ENCODE measurements at regions of chr16 and their contacts with region 1.

Region 1: DNA sequence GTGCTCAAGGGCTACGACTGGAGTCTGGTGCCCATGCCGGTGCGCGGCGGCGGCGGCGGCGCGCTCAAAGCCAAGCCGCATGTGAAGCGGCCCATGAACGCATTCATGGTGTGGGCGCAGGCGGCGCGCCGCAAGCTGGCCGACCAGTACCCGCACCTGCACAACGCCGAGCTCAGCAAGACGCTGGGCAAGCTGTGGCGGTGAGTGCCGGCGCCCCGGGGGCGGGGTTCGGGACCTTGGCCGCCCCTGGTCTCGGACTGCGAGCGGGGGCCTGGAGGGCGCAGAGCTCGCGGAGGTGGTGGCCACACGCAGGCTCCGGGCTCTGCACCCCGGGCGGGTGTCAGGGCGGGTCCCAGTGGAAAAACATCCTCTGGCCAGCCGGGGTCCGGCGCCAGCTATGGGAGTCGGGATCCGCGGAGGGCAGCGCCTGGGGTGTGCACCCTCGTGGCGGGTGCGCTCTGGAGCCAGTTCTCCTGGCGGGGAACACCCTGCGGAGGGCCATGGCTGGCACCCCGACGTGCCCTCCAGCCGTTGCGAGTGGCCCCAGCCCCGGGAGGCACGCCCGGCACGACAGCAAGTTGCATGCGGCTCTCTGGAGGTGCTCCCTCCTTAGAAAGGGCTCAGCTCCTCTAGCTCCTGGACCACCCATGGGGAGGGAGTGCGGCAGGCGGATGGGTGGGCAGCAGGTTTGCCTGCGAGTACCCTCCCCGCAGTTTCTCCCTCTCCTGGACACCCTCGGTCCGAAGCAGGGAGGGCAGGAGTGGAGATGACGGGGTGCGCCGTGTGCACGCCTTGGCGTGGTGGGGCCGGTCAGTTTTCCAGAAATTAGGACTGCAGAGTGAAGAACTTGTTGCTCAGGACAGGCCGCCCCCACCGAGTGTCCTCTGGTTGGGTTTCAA is 824 bp downstream of the SOX8 start:
- DNase-seq: peak in 1 of 9 donors; percentile 37
- ATAC-seq: peak; percentile 16
- H3K4me3 ChIP-seq: no peak overlapping the region
- H3K4me3 Mint-ChIP-seq: peak overlapping the region; percentile 23 to 83 (median 66)
- H3K27ac ChIP-seq: no peak overlapping the region
- H3K27ac Mint-ChIP-seq: peak overlapping the region in 3 of 9 donors; percentile 10 to 25 (median 13)
- H3K4me1 ChIP-seq: peaks cover 0 to 5% of the 10 kb centered on the region in 2 donors
- H3K4me1 Mint-ChIP-seq: peaks cover 0 to 20% (median 13%) of the 10 kb centered on the region in 7 donors
- H3K27me3 ChIP-seq: no peaks in the 10 kb centered on the region
- H3K27me3 Mint-ChIP-seq: peaks cover 0 to 29% (median 0%) of the 10 kb centered on the region in 5 donors

Region 2: DNA sequence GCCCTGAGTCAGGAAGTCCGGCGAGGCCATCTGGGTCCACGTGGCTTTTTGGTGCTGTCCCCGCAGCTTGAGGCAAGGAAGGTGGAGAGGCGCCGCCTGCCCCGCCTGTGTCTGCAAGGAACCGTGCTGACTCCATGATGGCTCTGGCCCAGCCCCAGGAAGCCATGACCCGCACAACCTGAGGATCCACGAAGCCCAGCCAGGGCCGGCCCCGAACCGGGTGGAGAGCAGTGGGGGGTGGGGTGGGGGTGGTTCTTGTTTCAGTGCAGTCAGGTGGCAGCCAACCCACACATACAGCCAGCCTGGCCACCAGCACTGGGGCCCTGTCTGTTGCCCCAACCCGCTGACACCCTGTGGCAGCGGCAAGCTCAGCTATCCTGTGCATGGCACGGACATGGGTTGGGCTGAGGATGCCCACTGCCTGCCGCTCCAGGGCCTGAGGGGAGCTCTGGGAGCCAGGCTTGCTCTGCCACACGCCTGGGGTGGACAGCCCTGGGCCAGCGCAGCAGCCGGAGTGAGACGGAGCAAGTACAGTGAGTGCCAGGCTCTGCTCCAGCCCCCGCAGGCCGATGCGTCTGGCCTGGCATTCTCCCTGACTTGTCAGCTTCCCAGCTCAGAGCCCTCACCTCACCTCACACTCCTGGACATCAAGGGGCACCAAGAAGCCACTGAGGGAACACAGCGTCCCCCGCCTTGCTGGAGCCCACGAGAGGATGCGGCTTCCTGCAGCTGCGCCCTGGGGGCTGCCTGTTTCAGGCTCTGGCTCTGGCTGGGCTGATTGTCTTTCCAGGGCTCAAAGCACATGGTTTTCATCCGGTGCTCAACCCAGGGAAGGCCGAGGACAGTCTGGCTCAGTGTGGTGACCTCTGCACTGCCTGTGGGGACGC is 80.4 kb before region 1 on chr16:
- CTCF ChIA-PET with region 1: no interaction called
- POLR2A ChIA-PET with region 1: no interaction called
- intact Hi-C with region 1: no loop called
- DNase-seq: no peak
- ATAC-seq: no peak
- H3K4me3 ChIP-seq: no peak overlapping the region
- H3K4me3 Mint-ChIP-seq: no peak overlapping the region
- H3K27ac ChIP-seq: no peak overlapping the region
- H3K27ac Mint-ChIP-seq: no peak overlapping the region
- H3K4me1 ChIP-seq: no peaks in the 10 kb centered on the region
- H3K4me1 Mint-ChIP-seq: peaks cover 0 to 9% (median 0%) of the 10 kb centered on the region in 7 donors
- H3K27me3 ChIP-seq: no peaks in the 10 kb centered on the region
- H3K27me3 Mint-ChIP-seq: no peaks in the 10 kb centered on the region

Region 3: DNA sequence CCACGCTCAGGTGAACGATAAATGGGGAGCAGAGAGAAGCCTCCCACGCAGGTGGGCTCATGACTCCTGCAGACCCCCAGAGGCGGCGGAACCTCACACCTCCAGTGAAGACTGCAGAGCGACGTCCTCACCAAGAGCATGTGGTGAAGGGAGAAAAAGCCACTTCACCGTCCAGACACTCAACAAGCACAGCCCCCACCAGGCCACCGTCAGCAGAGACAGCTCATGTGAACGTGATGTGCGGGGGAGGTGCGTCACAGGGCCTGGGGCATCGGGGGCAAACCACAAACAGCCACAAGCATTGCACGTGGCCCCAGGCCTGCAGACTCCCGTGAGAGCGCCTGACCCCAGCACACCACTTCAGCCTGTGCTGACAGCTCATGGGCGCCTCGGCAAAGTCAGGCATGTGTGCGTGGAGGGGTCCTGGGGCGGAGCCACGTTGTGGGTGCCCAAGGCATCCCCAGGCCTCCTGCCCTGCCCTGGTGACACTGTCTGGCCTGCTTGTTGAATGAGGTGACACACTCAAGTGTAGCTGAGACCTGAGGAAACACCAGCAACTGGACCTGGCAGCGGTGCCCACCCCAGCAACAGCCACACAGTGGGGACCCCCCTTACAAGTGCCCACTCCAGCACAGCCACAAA is 30.6 kb before region 1 on chr16:
- CTCF ChIA-PET with region 1: no interaction called
- POLR2A ChIA-PET with region 1: no interaction called
- intact Hi-C with region 1: no loop called
- DNase-seq: no peak
- ATAC-seq: no peak
- H3K4me3 ChIP-seq: no peak overlapping the region
- H3K4me3 Mint-ChIP-seq: no peak overlapping the region
- H3K27ac ChIP-seq: no peak overlapping the region
- H3K27ac Mint-ChIP-seq: no peak overlapping the region
- H3K4me1 ChIP-seq: no peaks in the 10 kb centered on the region
- H3K4me1 Mint-ChIP-seq: peaks cover 3 to 18% (median 14%) of the 10 kb centered on the region in 7 donors
- H3K27me3 ChIP-seq: no peaks in the 10 kb centered on the region
- H3K27me3 Mint-ChIP-seq: no peaks in the 10 kb centered on the region

Region 4: DNA sequence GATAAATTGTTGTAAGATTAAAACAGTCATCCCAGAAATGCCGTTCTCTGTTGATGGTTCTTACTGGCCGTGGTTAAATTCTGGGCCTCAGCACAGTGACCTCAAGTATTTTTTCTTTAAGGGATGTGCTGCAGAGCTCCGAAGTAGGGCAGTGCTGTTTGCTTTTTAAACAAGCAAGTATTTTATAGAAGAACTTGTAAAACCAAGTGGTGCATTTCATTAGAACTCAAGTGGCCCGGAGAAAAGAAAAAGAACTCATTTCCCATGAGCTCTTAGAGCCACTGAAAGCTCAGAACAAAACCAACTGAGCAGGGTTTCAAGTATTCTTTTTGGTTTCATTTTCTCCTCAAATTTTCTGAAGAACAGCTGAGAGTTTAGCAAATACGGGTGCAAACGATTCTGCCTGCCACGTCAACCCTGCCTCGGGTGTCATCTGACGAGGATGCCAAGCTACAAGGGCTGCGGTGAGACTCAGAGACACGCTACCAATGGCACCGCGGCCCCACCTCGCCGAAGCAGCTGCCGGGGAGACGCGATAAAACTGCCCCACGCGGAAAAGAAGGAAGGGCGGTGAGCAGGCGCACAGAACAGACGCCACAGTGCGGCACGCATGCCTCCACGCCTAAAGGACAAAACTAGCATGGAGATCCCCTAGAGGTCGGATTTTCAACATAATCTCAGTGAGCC is 17.9 kb before region 1 on chr16:
- CTCF ChIA-PET with region 1: no interaction called
- POLR2A ChIA-PET with region 1: interaction called, 66 read pairs
- intact Hi-C with region 1: loop called in 1 of 2 experiments (anchors 2 kb)
- DNase-seq: peak in 6 of 9 donors; percentile 59 to 82 (median 72)
- ATAC-seq: peak; percentile 96
- H3K4me3 ChIP-seq: no peak overlapping the region
- H3K4me3 Mint-ChIP-seq: peak overlapping the region; percentile 30 to 83 (median 74)
- H3K27ac ChIP-seq: peak overlapping the region; percentile 69
- H3K27ac Mint-ChIP-seq: peak overlapping the region; percentile 43 to 96 (median 87)
- H3K4me1 ChIP-seq: peaks cover under 1 to 10% of the 10 kb centered on the region in 2 donors
- H3K4me1 Mint-ChIP-seq: peaks cover 28 to 57% (median 48%) of the 10 kb centered on the region in 7 donors
- H3K27me3 ChIP-seq: no peaks in the 10 kb centered on the region
- H3K27me3 Mint-ChIP-seq: no peaks in the 10 kb centered on the region

Region 5: GRCh38 chr16:1003391-1004347 is 21.3 kb after region 1 on chr16:
- CTCF ChIA-PET with region 1: interaction called, 3 read pairs
- POLR2A ChIA-PET with region 1: interaction called, 87 read pairs
- intact Hi-C with region 1: loop called in 1 of 2 experiments (anchors 2 kb)
- DNase-seq: peak in 7 of 9 donors; percentile 50 to 69 (median 66)
- ATAC-seq: peak; percentile 76
- H3K4me3 ChIP-seq: peak overlapping the region; percentile 36
- H3K4me3 Mint-ChIP-seq: peak overlapping the region; percentile 74 to 90 (median 87)
- H3K27ac ChIP-seq: peak overlapping the region; percentile 68
- H3K27ac Mint-ChIP-seq: peak overlapping the region; percentile 73 to 98 (median 95)
- H3K4me1 ChIP-seq: peaks cover 25 to 37% of the 10 kb centered on the region in 2 donors
- H3K4me1 Mint-ChIP-seq: peaks cover 12 to 48% (median 28%) of the 10 kb centered on the region in 7 donors
- H3K27me3 ChIP-seq: no peaks in the 10 kb centered on the region
- H3K27me3 Mint-ChIP-seq: peaks cover 0 to 24% (median 0%) of the 10 kb centered on the region in 5 donors

Region 6: GRCh38 chr16:1054660-1055556 is 72.5 kb after region 1 on chr16:
- CTCF ChIA-PET with region 1: interaction called, 3 read pairs
- POLR2A ChIA-PET with region 1: interaction called, 5 read pairs
- intact Hi-C with region 1: loop called in 1 of 2 experiments (anchors 1 kb)
- DNase-seq: peak in 4 of 9 donors; percentile 23 to 41 (median 26)
- ATAC-seq: no peak
- H3K4me3 ChIP-seq: no peak overlapping the region
- H3K4me3 Mint-ChIP-seq: no peak overlapping the region
- H3K27ac ChIP-seq: no peak overlapping the region
- H3K27ac Mint-ChIP-seq: peak overlapping the region in 1 of 9 donors; percentile 46
- H3K4me1 ChIP-seq: no peaks in the 10 kb centered on the region
- H3K4me1 Mint-ChIP-seq: peaks cover 0 to 2% (median 0%) of the 10 kb centered on the region in 7 donors
- H3K27me3 ChIP-seq: no peaks in the 10 kb centered on the region
- H3K27me3 Mint-ChIP-seq: no peaks in the 10 kb centered on the region

Region 7: DNA sequence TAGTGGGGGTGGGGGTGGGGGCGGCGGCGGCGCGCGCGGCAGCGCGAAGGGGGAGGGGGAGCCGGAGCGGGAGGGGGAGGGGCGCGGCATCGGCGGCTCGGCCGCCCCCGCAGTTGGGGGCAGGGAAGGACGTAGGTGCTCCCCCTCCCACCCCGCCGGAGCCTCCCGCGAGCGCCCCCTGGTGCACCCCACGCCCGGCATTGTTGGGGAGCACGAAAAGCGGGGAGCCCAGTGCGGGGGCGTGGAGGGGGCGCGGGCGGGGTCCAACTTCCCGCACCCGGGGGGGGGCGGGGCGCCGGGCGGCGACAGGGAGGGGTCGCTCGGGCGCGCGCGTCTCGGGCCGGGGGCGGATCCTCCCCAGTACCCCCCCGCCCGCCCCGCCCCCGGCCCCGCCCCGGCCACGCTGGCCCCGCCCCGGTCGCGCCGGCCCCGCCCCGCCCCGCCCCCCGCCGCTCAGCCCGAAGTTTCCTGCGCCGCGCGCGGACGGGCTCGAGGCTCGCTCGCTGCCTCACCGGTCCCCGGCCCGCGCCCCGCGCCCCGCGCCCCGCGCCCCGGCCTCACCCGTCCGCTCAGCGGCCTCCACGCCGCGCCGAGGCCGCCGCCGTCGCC is 170.4 kb after region 1 on chr16 and contains the start of gene CACNA1H:
- CTCF ChIA-PET with region 1: no interaction called
- POLR2A ChIA-PET with region 1: no interaction called
- intact Hi-C with region 1: loop called in 1 of 2 experiments (anchors 5 kb)
- DNase-seq: peak; percentile 56 to 86 (median 70)
- ATAC-seq: peak; percentile 86
- H3K4me3 ChIP-seq: no peak within 1 kb of the TSS
- H3K4me3 Mint-ChIP-seq: peak within 1 kb of the TSS in 9 of 10 donors; percentile 44 to 81 (median 64)
- H3K27ac ChIP-seq: peak within 1 kb of the TSS; percentile 8
- H3K27ac Mint-ChIP-seq: peak within 1 kb of the TSS in 1 of 9 donors; percentile 65
- H3K4me1 ChIP-seq: peaks cover 3 to 16% of the 10 kb centered on the region in 2 donors
- H3K4me1 Mint-ChIP-seq: no peaks in the 10 kb centered on the region
- H3K27me3 ChIP-seq: no peaks in the 10 kb centered on the region
- H3K27me3 Mint-ChIP-seq: peaks cover 0 to 18% (median 6%) of the 10 kb centered on the region in 5 donors
- total RNA-seq, gene CACNA1H: 0.31 to 8.8 (median 2.2) TPM